Panc1 (cell line): ENCODE measurements at regions of chr10 and their contacts with region 1.

Region 1: GRCh38 chr10:101725296-101726115 is 30.5 kb upstream of the FBXW4 start:
- DNase-seq: no peak
- ATAC-seq: no peak
- H3K4me3 ChIP-seq: no peak overlapping the region
- H3K27ac ChIP-seq: no peak overlapping the region
- H3K4me1 ChIP-seq: no peaks in the 10 kb centered on the region
- H3K27me3 ChIP-seq: no peaks in the 10 kb centered on the region
- CTCF ChIP-seq: no peak

Region 2: GRCh38 chr10:101576211-101576863 is 149.2 kb before region 1 on chr10:
- CTCF ChIA-PET with region 1: no interaction called
- POLR2A ChIA-PET with region 1: no interaction called
- in situ Hi-C with region 1: no loop called
- intact Hi-C with region 1: no loop called
- DNase-seq: no peak
- ATAC-seq: no peak
- H3K4me3 ChIP-seq: no peak overlapping the region
- H3K27ac ChIP-seq: no peak overlapping the region
- H3K4me1 ChIP-seq: no peaks in the 10 kb centered on the region
- H3K27me3 ChIP-seq: no peaks in the 10 kb centered on the region
- CTCF ChIP-seq: no peak

Region 3: GRCh38 chr10:101644002-101644401 is 81.5 kb before region 1 on chr10:
- CTCF ChIA-PET with region 1: no interaction called
- POLR2A ChIA-PET with region 1: interaction called, 12 read pairs
- in situ Hi-C with region 1: no loop called
- intact Hi-C with region 1: no loop called
- DNase-seq: no peak
- ATAC-seq: no peak
- H3K4me3 ChIP-seq: no peak overlapping the region
- H3K27ac ChIP-seq: no peak overlapping the region
- H3K4me1 ChIP-seq: no peaks in the 10 kb centered on the region
- H3K27me3 ChIP-seq: no peaks in the 10 kb centered on the region
- CTCF ChIP-seq: no peak

Region 4: DNA sequence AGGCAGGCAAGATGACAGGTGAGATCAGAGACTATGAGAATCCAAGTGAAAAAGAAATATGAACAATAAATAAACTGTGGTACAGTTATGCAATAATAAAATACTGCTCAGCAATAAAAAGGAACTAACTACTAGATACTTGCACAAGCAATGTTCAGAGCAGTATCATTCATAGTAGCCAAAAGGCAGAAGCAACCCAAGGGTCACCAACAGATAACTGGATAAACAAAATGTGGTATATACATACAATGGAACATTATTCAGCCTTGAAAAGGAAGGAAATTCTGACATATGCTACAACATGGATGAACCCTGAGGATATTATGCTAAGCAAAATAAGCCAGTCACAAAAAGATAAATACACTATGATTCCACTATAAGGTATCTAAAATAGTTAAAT is 195.0 kb after region 1 on chr10:
- CTCF ChIA-PET with region 1: no interaction called
- POLR2A ChIA-PET with region 1: interaction called, 11 read pairs
- in situ Hi-C with region 1: no loop called
- intact Hi-C with region 1: no loop called
- DNase-seq: no peak
- ATAC-seq: no peak
- H3K4me3 ChIP-seq: no peak overlapping the region
- H3K27ac ChIP-seq: no peak overlapping the region
- H3K4me1 ChIP-seq: no peaks in the 10 kb centered on the region
- H3K27me3 ChIP-seq: no peaks in the 10 kb centered on the region
- CTCF ChIP-seq: no peak